Kidney (tissue), 22 donors: ENCODE measurements at regions of chr13 and their contacts with region 1.

Region 1: GRCh38 chr13:83136660-83137059 is 745.6 kb downstream of the SLITRK1 start:
- DNase-seq: no peak
- H3K4me3 ChIP-seq: no peak overlapping the region
- H3K27ac ChIP-seq: no peak overlapping the region
- H3K4me1 ChIP-seq: no peaks in the 10 kb centered on the region
- H3K27me3 ChIP-seq: no peaks in the 10 kb centered on the region
- CTCF ChIP-seq: no peak

Region 2: DNA sequence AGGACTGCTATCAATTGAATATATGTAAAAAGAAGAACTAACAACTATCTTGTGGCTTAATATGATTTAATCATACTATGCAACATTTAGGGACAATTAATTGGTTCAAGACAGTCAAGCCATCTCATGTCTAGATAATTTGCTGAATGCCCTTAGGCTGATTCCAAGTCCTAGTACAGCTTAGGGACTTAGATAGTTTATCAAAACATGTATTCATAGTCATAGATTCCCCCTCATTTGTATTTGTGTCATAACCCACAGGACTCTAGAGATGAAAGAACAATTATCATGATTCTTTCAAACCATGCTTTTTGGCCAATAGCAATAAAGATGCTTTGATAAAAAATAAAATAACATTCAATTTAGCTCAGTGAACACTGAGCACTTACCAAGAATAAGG is 138.0 kb after region 1 on chr13:
- intact Hi-C with region 1: loop called (anchors 5 kb)
- DNase-seq: no peak
- H3K4me3 ChIP-seq: no peak overlapping the region
- H3K27ac ChIP-seq: no peak overlapping the region
- H3K4me1 ChIP-seq: no peaks in the 10 kb centered on the region
- H3K27me3 ChIP-seq: no peaks in the 10 kb centered on the region
- CTCF ChIP-seq: no peak